Activated CD4-positive, alpha-beta T cell treated with anti-CD3 and anti-CD28 coated beads for 36 hours (primary cell): ENCODE measurements at regions of chr12 and their contacts with region 1.

Region 1: DNA sequence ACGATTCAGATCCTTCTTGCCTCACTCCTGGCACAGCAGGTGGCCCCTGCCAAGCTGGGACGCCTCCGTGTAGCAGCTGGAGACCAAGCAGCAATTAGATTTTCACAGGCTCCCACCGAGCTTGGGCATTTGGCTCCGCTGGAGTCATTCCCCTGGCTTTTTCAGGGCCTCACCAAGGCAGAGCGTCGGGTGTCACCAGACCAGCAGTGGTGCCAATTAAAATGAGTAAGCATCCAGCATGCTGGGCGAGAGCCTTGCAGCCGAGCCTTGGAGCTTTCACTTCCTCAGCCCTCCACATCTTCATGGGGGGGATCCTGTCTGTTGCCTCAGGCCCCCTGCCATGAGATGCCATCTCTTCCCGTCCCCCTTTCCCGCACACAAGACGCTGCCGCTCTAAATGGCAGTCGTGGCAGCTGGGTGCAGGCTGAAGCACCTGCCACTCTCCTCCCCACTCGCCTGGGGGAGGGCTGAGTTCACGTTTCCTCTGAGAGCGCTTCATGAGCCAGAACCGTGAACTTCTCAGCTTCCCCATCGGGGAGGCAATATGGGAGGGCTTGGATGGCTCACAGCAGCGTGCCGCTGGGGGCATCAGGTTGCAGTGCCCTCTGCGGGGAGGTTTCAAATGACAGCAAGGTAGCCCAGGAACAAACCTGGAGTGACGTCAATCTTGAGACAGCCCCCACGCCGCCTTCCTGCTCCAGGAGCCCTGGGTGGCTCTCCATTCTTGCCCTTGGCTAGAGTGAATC is 11.7 kb downstream of the TPCN1 start:
- DNase-seq: peak; percentile 80
- ATAC-seq: peak; percentile 77
- H3K4me3 Mint-ChIP-seq: peak overlapping the region; percentile 64
- H3K27ac Mint-ChIP-seq: peak overlapping the region; percentile 93
- H3K4me1 Mint-ChIP-seq: peaks cover 60% of the 10 kb centered on the region
- H3K27me3 Mint-ChIP-seq: no peaks in the 10 kb centered on the region

Region 2: DNA sequence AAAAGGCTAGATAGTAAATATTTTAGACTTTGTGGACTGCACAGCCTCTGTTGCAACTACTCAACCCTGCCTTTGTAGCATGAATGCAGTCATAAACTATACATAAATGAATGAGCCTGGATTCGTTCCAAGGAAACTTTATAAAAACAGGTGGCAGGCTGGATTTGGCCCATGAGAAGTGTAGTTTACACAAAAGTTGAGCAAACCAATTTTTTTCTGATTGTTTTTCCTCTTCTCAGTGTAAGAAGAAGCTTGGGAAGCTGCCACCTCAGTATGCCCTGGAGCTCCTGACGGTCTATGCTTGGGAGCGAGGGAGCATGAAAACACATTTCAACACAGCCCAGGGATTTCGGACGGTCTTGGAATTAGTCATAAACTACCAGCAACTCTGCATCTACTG is 316.7 kb before region 1 on chr12:
- CTCF ChIA-PET with region 1: no interaction called
- POLR2A ChIA-PET with region 1: no interaction called
- intact Hi-C with region 1: no loop called
- DNase-seq: no peak
- ATAC-seq: no peak
- H3K4me3 Mint-ChIP-seq: no peak overlapping the region
- H3K27ac Mint-ChIP-seq: no peak overlapping the region
- H3K4me1 Mint-ChIP-seq: peaks cover 4% of the 10 kb centered on the region
- H3K27me3 Mint-ChIP-seq: no peaks in the 10 kb centered on the region

Region 3: GRCh38 chr12:113208041-113208934 is 24.7 kb before region 1 on chr12:
- CTCF ChIA-PET with region 1: interaction called, 4 read pairs
- POLR2A ChIA-PET with region 1: no interaction called
- intact Hi-C with region 1: loop called (anchors 1 kb)
- DNase-seq: peak; percentile 85
- ATAC-seq: peak; percentile 86
- H3K4me3 Mint-ChIP-seq: peak overlapping the region; percentile 45
- H3K27ac Mint-ChIP-seq: peak overlapping the region; percentile 95
- H3K4me1 Mint-ChIP-seq: peaks cover 54% of the 10 kb centered on the region
- H3K27me3 Mint-ChIP-seq: no peaks in the 10 kb centered on the region

Region 4: GRCh38 chr12:113385282-113385882 is 152.4 kb after region 1 on chr12:
- CTCF ChIA-PET with region 1: no interaction called
- POLR2A ChIA-PET with region 1: no interaction called
- intact Hi-C with region 1: no loop called
- DNase-seq: no peak
- ATAC-seq: no peak
- H3K4me3 Mint-ChIP-seq: no peak overlapping the region
- H3K27ac Mint-ChIP-seq: no peak overlapping the region
- H3K4me1 Mint-ChIP-seq: no peaks in the 10 kb centered on the region
- H3K27me3 Mint-ChIP-seq: no peaks in the 10 kb centered on the region